WTC11 (cell line): ENCODE measurements at regions of chr7 and their contacts with region 1.

Region 1: DNA sequence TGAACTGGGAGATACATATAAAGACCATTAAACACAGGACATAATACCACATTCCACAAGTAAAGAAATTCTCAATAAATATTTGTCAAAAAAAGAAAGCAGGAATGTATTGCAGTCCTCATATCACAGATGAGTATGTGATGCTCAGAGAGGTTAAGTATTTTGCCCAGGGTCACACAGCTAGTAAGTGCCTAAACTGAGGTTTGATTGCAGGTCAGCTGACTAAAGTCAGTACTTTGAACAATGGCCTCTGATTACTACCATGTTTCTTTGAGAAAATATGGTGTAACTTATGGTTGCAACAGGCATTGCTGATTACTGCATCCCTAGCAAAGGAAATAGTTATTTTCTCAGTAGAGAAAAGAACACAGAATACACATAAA is 267.1 kb downstream of the ELMO1 start:
- DNase-seq: no peak
- ATAC-seq: peak; percentile 7; the same call in 1 of the 2 replicates
- H3K4me3 Mint-ChIP-seq: no peak overlapping the region; the same call in 1 of the 2 replicates
- H3K27ac Mint-ChIP-seq: peak overlapping the region; percentile 58; the same call in 1 of the 2 replicates
- H3K4me1 Mint-ChIP-seq: peaks cover 19% of the 10 kb centered on the region
- H3K27me3 Mint-ChIP-seq: no peaks in the 10 kb centered on the region
- CTCF ChIP-seq: no peak

Region 2: GRCh38 chr7:36487756-36488336 is 693.7 kb before region 1 on chr7:
- CTCF ChIA-PET with region 1: interaction called, 24 read pairs
- POLR2A ChIA-PET with region 1: no interaction called
- DNase-seq: no peak
- ATAC-seq: peak; percentile 57; the same call in 1 of the 2 replicates
- H3K4me3 Mint-ChIP-seq: no peak overlapping the region
- H3K27ac Mint-ChIP-seq: no peak overlapping the region
- H3K4me1 Mint-ChIP-seq: no peaks in the 10 kb centered on the region
- H3K27me3 Mint-ChIP-seq: no peaks in the 10 kb centered on the region
- CTCF ChIP-seq: peak; percentile 54

Region 3: DNA sequence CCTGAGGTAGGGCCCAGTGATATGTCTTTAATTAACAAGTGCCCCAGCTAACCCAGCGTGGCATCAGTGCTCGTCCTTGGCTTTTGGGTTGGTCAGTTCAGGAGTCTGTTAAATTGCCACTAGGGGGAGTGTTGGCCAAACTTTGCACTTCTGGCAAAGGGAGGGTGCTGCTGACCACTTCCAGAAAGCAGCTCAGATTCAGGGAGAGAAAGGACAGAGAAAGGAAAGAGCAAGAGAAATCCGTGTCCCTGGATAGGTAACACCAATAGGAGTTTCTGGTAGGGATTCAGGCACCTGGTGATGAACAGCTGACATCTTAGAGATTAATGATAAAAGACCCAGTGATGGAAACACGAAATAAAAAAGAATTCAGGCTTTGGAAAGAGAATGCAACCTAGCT is 214.2 kb before region 1 on chr7:
- CTCF ChIA-PET with region 1: interaction called, 81 read pairs
- POLR2A ChIA-PET with region 1: interaction called, 5 read pairs
- DNase-seq: peak; percentile 65
- ATAC-seq: peak; percentile 96
- H3K4me3 Mint-ChIP-seq: no peak overlapping the region
- H3K27ac Mint-ChIP-seq: no peak overlapping the region; the same call in 1 of the 2 replicates
- H3K4me1 Mint-ChIP-seq: peaks cover 49% of the 10 kb centered on the region
- H3K27me3 Mint-ChIP-seq: no peaks in the 10 kb centered on the region
- CTCF ChIP-seq: peak; percentile 78

Region 4: GRCh38 chr7:36986429-36987362 is 194.8 kb before region 1 on chr7:
- CTCF ChIA-PET with region 1: interaction called, 34 read pairs
- POLR2A ChIA-PET with region 1: no interaction called
- DNase-seq: peak; percentile 86
- ATAC-seq: peak; percentile 90
- H3K4me3 Mint-ChIP-seq: peak overlapping the region; percentile 8
- H3K27ac Mint-ChIP-seq: 0 out of 2 replicates have a peak overlapping the region, but pooled peaks have one; percentile 58
- H3K4me1 Mint-ChIP-seq: peaks cover 33% of the 10 kb centered on the region
- H3K27me3 Mint-ChIP-seq: no peaks in the 10 kb centered on the region
- CTCF ChIP-seq: peak; percentile 85

Region 5: DNA sequence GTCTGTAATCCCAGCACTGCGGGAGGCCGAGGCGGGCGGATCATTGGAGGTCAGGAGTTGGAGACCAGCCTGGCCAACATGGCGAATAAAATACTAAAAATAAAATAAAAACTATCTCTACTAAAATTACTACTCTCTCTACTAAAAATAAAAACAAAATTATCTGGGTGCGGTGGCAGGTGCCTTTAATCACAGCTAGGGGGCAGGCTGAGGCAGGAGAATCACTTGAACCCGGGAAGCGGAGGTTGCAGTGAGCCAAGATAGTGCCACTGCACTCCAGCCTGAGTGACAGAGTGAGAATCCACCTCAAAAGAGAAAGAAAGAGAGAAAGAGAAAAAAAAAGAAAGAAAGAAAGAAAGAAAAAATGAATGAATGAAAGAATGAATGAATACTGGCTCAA is 84.3 kb before region 1 on chr7:
- CTCF ChIA-PET with region 1: interaction called, 21 read pairs
- POLR2A ChIA-PET with region 1: no interaction called
- DNase-seq: no peak
- ATAC-seq: no peak
- H3K4me3 Mint-ChIP-seq: no peak overlapping the region
- H3K27ac Mint-ChIP-seq: no peak overlapping the region
- H3K4me1 Mint-ChIP-seq: peaks cover 30% of the 10 kb centered on the region
- H3K27me3 Mint-ChIP-seq: no peaks in the 10 kb centered on the region
- CTCF ChIP-seq: peak; percentile 53; the same call in 1 of the 2 replicates

Region 6: GRCh38 chr7:37193087-37193774 is 11.7 kb after region 1 on chr7:
- CTCF ChIA-PET with region 1: interaction called, 29 read pairs
- POLR2A ChIA-PET with region 1: no interaction called
- DNase-seq: no peak
- ATAC-seq: no peak
- H3K4me3 Mint-ChIP-seq: no peak overlapping the region
- H3K27ac Mint-ChIP-seq: no peak overlapping the region
- H3K4me1 Mint-ChIP-seq: no peaks in the 10 kb centered on the region
- H3K27me3 Mint-ChIP-seq: no peaks in the 10 kb centered on the region
- CTCF ChIP-seq: no peak